Activated CD8-positive, alpha-beta T cell treated with anti-CD3 and anti-CD28 coated beads for 36 hours (primary cell): ENCODE measurements at regions of chr2 and their contacts with region 1.

Region 1: GRCh38 chr2:197191177-197191939 is 119.2 kb downstream of the ANKRD44 start:
- DNase-seq: no peak
- ATAC-seq: peak; percentile 40
- H3K4me3 Mint-ChIP-seq: peak overlapping the region; percentile 41
- H3K27ac Mint-ChIP-seq: peak overlapping the region; percentile 78
- H3K4me1 Mint-ChIP-seq: peaks cover 76% of the 10 kb centered on the region
- H3K27me3 Mint-ChIP-seq: no peaks in the 10 kb centered on the region
- CTCF ChIP-seq: peak; percentile 84

Region 2: DNA sequence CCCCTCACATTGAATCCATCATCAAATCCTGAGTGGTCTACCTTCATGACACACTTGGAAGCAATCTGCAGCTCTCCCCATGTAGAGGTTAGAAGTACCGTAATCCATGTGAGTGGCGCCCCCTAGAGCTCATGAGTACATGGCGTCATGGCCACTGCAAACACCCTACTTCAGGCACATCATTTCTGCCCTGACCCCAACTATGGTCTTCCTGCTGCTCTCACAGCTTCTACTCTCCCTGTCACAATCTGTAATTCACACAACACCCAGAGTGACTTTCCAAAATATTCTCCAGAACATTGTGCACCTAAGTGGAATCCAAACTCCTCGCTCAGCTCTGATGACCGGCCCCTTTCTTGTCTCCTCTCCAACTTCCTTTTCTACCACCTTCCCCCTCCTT is 22.7 kb before region 1 on chr2:
- CTCF ChIA-PET with region 1: interaction called, 31 read pairs
- POLR2A ChIA-PET with region 1: interaction called, 3 read pairs
- intact Hi-C with region 1: no loop called
- DNase-seq: peak; percentile 88
- ATAC-seq: peak; percentile 86
- H3K4me3 Mint-ChIP-seq: no peak overlapping the region
- H3K27ac Mint-ChIP-seq: peak overlapping the region; percentile 71
- H3K4me1 Mint-ChIP-seq: peaks cover 61% of the 10 kb centered on the region
- H3K27me3 Mint-ChIP-seq: no peaks in the 10 kb centered on the region
- CTCF ChIP-seq: peak; percentile 68

Region 3: GRCh38 chr2:197209742-197210408 is 18.5 kb after region 1 on chr2:
- CTCF ChIA-PET with region 1: interaction called, 22 read pairs
- POLR2A ChIA-PET with region 1: interaction called, 4 read pairs
- intact Hi-C with region 1: no loop called
- DNase-seq: peak; percentile 67
- ATAC-seq: peak; percentile 45
- H3K4me3 Mint-ChIP-seq: peak overlapping the region; percentile 64
- H3K27ac Mint-ChIP-seq: peak overlapping the region; percentile 97
- H3K4me1 Mint-ChIP-seq: peaks cover 96% of the 10 kb centered on the region
- H3K27me3 Mint-ChIP-seq: no peaks in the 10 kb centered on the region
- CTCF ChIP-seq: no peak

Region 4: DNA sequence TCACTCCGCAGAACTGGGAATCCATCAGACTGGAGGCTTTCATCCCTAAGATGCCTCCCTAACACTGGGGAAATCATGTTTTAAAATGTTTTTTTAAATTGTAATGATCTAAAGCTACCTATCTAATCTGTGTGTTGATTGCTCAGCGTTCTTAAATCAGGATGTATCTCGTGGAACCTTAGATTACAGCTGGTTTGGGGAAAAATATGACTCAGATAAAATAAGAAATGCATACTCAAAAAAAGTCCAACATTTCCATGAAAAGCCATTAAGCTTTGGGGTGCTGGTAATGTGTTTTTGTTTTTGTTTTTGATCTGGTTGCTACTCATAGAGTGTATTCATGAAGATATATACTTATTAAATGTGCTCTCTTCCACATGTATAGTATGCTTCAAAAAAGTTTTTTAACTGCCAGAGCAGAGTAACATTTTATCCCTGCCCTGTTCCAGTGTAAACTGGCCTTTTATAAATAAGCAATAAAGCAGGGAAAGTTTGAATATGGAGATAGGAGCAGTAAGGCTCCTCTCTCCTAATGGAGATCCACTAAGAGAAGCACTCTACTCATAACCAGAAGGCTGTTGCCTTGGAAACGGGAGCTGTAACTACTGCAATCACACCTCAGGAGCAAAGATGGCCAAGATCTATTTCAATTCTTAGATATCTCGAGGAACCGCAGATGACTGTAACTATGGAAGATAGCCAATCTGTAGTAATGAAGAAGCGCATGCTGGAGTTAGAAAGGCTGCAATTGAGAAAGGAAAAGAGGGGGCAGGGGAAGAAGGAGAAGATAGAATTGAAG is 77.6 kb after region 1 on chr2:
- CTCF ChIA-PET with region 1: interaction called, 22 read pairs
- POLR2A ChIA-PET with region 1: no interaction called
- intact Hi-C with region 1: no loop called
- DNase-seq: peak; percentile 69
- ATAC-seq: peak; percentile 60
- H3K4me3 Mint-ChIP-seq: no peak overlapping the region
- H3K27ac Mint-ChIP-seq: peak overlapping the region; percentile 90
- H3K4me1 Mint-ChIP-seq: peaks cover 91% of the 10 kb centered on the region
- H3K27me3 Mint-ChIP-seq: no peaks in the 10 kb centered on the region
- CTCF ChIP-seq: no peak

Region 5: DNA sequence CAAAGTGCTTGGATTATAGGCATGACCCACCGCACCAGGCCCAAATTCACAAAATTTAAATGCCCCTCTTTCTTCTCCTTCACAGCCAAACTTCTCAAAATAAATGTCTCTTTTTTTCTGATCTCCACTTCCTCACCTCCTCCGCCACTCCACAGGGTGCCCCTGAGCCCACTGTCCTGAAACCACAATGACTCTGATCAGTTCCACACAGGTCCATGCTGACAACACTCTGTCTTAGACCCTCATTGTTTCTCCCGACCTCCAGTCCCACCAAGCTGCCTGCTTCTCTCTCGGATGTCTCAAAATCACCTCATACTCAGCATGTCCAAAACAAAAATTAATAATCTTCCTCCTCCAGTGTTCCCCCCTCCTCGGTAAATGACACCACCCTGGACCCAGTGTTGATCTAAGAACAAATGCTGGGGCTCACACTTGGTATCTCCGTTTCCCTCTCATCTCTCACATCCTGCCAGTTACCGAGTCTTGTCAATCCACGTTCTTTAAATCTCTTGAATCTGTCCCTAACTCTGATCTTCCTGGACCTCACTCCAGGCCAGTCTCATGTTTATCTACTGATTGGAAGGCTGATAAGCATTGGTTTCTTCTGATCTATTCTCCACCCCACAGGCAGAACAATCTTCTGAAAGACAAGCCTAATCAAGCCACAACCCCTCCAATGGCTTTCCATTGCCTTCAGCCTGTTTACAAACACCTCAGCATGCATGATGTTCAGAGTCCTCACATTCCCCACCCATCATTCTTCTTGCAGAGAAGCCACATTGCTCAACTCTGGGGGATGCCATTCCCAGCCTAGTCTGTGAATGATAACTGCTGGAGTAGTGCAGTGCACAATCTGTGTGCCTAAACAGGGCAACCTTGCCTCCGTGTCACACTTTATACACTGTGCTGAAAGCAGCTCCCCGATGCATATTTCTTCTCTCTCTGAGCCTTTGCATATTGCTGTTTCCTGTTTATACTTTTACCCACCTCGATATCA is 131.7 kb after region 1 on chr2:
- CTCF ChIA-PET with region 1: interaction called, 20 read pairs
- POLR2A ChIA-PET with region 1: no interaction called
- intact Hi-C with region 1: no loop called
- DNase-seq: peak; percentile 37
- ATAC-seq: peak; percentile 54
- H3K4me3 Mint-ChIP-seq: peak overlapping the region; percentile 61
- H3K27ac Mint-ChIP-seq: peak overlapping the region; percentile 95
- H3K4me1 Mint-ChIP-seq: peaks cover 72% of the 10 kb centered on the region
- H3K27me3 Mint-ChIP-seq: no peaks in the 10 kb centered on the region
- CTCF ChIP-seq: no peak